Calu3 (cell line): ENCODE measurements at regions of chr20 and their contacts with region 1.

Region 1: GRCh38 chr20:59925939-59926338 is 7.5 kb downstream of the SYCP2 start:
- DNase-seq: peak; percentile 50
- H3K4me3 Mint-ChIP-seq: peak overlapping the region; percentile 43
- H3K27ac Mint-ChIP-seq: peak overlapping the region; percentile 83
- H3K4me1 Mint-ChIP-seq: peaks cover 73% of the 10 kb centered on the region
- H3K27me3 Mint-ChIP-seq: no peaks in the 10 kb centered on the region
- CTCF ChIP-seq: no peak

Region 2: GRCh38 chr20:59770270-59770669 is 155.7 kb before region 1 on chr20:
- CTCF ChIA-PET with region 1: no interaction called
- intact Hi-C with region 1: loop called (anchors 5 kb)
- DNase-seq: peak; percentile 76
- H3K4me3 Mint-ChIP-seq: no peak overlapping the region
- H3K27ac Mint-ChIP-seq: no peak overlapping the region
- H3K4me1 Mint-ChIP-seq: peaks cover 47% of the 10 kb centered on the region
- H3K27me3 Mint-ChIP-seq: peaks cover 31% of the 10 kb centered on the region
- CTCF ChIP-seq: peak; percentile 66

Region 3: DNA sequence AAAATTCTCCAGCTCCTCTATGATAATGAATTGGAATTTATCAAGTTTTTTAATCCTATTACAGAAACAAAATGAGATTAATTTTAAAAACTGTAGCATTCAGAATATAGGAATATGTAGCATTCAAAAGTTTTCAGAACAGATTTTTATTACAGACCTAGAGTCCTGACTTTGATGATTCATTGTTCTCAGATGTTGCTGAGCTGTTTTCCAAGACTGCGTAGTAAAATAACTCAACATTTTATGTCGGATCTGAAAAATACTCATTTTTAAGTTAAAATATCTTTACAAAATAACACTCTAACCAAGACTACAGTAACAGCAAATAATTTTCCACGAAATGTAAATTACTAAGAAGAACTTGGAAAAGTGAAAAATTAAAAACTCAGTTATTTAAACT is 59.6 kb before region 1 on chr20:
- CTCF ChIA-PET with region 1: no interaction called
- intact Hi-C with region 1: no loop called
- DNase-seq: no peak
- H3K4me3 Mint-ChIP-seq: no peak overlapping the region
- H3K27ac Mint-ChIP-seq: no peak overlapping the region
- H3K4me1 Mint-ChIP-seq: no peaks in the 10 kb centered on the region
- H3K27me3 Mint-ChIP-seq: no peaks in the 10 kb centered on the region
- CTCF ChIP-seq: no peak